Posterior vena cava (tissue), 2 donors: ENCODE measurements at regions of chr3 and their contacts with region 1.

Region 1: GRCh38 chr3:192675958-192676649 is 51.2 kb downstream of the FGF12 start:
- DNase-seq: no peak

Region 2: DNA sequence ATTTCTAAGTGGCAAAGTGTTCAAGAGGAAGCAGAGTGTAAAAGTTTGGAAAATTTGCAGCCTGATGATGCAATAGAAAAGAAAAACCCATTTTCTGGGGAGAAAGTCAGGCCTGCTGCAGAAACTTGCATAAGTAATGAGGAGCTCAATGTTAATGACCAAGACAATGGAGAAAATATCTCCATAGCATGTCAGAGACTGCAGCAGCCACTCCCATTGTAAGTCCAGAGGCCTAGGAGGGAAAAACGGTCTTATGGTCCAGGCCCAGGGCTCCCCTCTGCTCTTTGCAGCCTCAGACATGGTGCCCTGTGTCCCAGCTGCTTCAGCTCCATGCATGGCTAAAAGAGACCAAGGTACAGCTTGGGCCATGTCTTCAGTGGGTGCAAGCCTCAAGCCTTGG is 1717.0 kb before region 1 on chr3:
- intact Hi-C with region 1: loop called in 1 of 2 experiments (anchors 5 kb)
- DNase-seq: no peak